A549 (cell line): ENCODE measurements at regions of chr7 and their contacts with region 1.

Region 1: GRCh38 chr7:121994625-121995410 is 121.9 kb downstream of the PTPRZ1 start:
- DNase-seq: peak; percentile 50 to 77
- ATAC-seq: peak; percentile 88 to 98
- H3K4me3 ChIP-seq: no peak overlapping the region
- H3K27ac ChIP-seq: no peak overlapping the region
- H3K4me1 ChIP-seq: no peaks in the 10 kb centered on the region
- CTCF ChIP-seq: peak; percentile 80
- EP300 ChIP-seq: no peak
- POLR2A ChIP-seq: no peak
- RAD21 ChIP-seq: peak; percentile 75 to 77

Region 2: GRCh38 chr7:121752706-121753105 is 242.1 kb before region 1 on chr7:
- CTCF ChIA-PET with region 1: interaction called, 30 read pairs
- POLR2A ChIA-PET with region 1: no interaction called
- DNase-seq: peak in 1 of 2 experiments; percentile 20
- ATAC-seq: peak in 1 of 2 experiments; percentile 40; a peak in 1 of 6 replicates
- H3K4me3 ChIP-seq: no peak overlapping the region
- H3K27ac ChIP-seq: no peak overlapping the region
- H3K4me1 ChIP-seq: no peaks in the 10 kb centered on the region
- CTCF ChIP-seq: peak; percentile 20; the same call in 1 of the 3 replicates
- EP300 ChIP-seq: no peak
- POLR2A ChIP-seq: no peak
- RAD21 ChIP-seq: peak in 1 of 2 experiments; percentile 20; a peak in 1 of 5 replicates

Region 3: GRCh38 chr7:122006687-122007086 is 11.9 kb after region 1 on chr7:
- CTCF ChIA-PET with region 1: interaction called, 14 read pairs
- POLR2A ChIA-PET with region 1: no interaction called
- DNase-seq: no peak
- ATAC-seq: no peak
- H3K4me3 ChIP-seq: no peak overlapping the region
- H3K27ac ChIP-seq: no peak overlapping the region
- H3K4me1 ChIP-seq: no peaks in the 10 kb centered on the region
- CTCF ChIP-seq: no peak
- EP300 ChIP-seq: no peak
- POLR2A ChIP-seq: no peak
- RAD21 ChIP-seq: no peak